ENCODE measurements at regions of chr15 and their contacts with region 1.

Region 1: DNA sequence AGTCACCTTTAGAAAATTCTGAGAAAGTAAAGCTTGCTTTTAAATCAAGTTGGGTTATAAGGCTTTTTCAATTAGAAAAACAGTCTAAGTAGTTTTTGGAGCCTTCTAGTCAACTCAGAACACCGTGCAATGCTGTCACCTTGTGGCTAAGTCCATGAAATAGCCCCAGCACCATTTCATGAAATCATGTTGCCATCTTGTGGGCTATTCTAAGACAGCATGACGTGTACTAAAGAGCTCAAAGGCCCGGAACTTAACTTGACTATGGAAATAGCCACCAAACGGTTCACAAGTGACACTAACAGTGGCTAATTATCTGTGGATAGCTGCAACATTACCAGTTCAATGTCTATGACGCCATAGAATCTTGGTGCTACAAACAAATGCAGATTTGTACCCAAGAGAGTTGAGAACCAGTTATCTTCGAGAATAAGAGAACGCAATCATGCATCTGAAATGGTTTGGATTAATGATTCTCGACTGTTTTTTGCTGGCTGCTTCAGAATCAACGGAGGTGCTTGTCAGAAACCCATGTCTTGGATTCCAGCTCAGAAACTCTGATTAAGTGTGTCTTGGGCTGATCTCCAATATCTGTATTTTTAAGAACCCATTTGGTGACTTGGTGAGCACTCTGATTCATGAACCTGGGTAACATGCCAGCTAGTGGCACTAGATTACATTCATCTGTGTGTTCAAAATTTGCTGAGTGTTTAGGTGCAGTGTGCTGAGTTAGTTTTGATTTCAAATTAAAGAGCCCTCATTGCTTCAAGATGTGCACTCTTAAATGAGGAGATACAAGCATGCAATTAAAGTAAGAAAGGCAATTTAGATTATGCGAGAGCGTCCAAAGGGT is 111.2 kb upstream of the MCTP2 start:
- DNase-seq: peak; percentile 62
- H3K4me3 ChIP-seq: peak overlapping the region in 1 of 2 experiments; percentile 18; a peak in 1 of 4 replicates
- H3K27ac ChIP-seq: peak overlapping the region in 1 of 2 experiments; percentile 17; a peak in 1 of 4 replicates
- H3K4me1 ChIP-seq: peaks cover 0 to 10% of the 10 kb centered on the region in 2 experiments; a peak in 1 of 4 replicates
- H3K27me3 ChIP-seq: no peaks in the 10 kb centered on the region
- CTCF ChIP-seq: peak; percentile 100
- EP300 ChIP-seq: no peak
- RAD21 ChIP-seq: peak; percentile 100

Region 2: DNA sequence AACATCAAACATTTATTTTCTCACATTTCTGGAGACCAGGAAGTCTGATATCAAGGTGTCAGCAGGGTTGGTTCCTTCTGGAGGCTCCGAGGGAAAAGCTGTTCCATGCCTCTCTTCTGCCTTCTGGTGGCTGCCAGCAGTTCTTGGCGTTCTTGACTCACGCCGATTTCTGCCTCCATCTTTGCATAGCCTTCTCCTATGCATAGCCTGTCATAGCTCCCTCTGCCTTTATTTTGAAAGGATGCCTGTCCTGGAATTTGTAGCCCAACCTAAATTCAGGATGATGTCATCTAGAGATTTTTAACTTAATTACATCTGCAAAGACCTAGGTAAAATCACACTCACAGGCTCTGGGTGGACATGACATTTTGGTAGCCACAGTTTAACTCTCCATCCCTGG is 1101.6 kb before region 1 on chr15:
- CTCF ChIA-PET with region 1: interaction called, 191 read pairs
- POLR2A ChIA-PET with region 1: no interaction called
- DNase-seq: no peak
- H3K4me3 ChIP-seq: no peak overlapping the region
- H3K27ac ChIP-seq: no peak overlapping the region
- H3K4me1 ChIP-seq: no peaks in the 10 kb centered on the region
- H3K27me3 ChIP-seq: no peaks in the 10 kb centered on the region
- CTCF ChIP-seq: peak; percentile 23; the same call in 1 of the 2 replicates
- EP300 ChIP-seq: no peak
- RAD21 ChIP-seq: 0 out of 2 replicates have a peak, but pooled peaks have one; percentile 20

Region 3: DNA sequence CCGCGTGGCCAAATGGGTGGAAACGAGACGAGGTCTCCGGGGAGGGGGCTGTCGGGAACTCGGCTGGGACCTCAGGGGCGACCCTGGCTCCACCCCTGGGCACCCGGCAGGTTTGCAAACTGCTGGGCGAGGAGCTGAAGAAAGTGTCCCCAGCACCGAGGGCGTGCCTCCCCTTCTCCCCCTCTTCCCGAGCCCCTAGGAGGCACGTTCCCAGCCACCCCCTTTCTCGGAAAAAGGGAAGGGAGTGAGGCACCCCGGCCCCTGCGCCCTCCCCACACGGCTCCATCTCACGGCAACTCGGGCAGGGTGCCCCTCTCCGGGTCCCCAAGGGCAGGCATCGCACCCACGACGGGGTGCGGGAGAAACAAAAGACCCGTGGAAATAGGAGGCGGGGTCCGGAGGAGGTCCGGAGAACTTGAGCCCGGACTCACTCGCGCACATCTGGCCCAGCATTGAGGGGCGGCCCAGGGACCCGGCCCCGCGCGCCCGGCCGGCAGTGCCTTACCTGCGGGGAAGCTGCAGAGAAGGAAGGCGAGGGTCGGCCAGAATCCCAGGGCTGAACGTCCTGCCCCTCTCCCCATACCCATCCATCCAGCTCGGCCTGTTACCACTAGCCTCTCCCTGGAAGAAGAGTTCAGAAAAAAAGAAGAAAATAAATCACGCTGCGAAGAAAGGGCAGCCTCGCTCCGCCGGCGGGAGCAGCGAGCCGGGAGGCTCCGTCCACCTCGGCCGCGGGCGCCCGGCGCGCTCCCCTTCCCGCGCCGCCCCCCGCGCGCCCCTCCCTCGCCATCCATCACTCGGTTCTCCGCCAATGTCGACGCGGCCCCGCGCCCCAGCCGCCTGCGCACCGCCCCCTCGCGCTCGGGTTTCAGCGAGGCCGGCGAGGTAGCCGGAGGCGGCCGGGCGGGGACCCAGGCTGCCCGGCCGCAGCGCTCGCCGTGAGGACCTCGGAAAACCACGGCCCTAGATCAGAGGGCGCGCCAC is 1047.4 kb before region 1 on chr15:
- CTCF ChIA-PET with region 1: interaction called, 23 read pairs
- POLR2A ChIA-PET with region 1: no interaction called
- DNase-seq: peak; percentile 95
- H3K4me3 ChIP-seq: peak overlapping the region; percentile 70 to 87
- H3K27ac ChIP-seq: peak overlapping the region in 1 of 2 experiments; percentile 30; a peak in 1 of 4 replicates
- H3K4me1 ChIP-seq: peaks cover 5 to 8% of the 10 kb centered on the region in 2 experiments
- H3K27me3 ChIP-seq: no peaks in the 10 kb centered on the region
- CTCF ChIP-seq: no peak
- EP300 ChIP-seq: no peak
- RAD21 ChIP-seq: no peak

Region 4: DNA sequence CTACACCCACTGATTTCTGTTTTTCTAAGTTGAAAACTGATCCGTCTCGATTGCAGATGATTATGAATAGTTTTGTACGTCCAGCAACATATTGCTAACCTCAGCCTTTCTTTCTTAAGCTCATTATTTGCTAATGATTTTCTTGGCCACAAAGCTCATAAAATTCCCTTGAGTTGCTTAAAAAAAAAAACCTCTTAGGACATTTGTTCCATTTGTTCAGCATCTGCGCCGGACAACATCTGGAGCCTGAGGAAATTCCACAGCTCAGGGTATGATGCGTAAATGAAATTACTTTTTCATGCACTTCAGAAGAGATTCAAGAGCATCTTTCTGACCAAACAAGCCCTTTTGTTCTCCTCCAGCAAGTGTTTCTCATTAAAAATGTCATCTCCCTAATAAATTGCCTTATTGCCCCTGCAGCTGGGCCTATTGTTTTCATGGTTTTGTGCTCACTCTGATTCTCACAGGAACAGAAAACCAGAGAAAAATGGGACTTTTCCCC is 137.9 kb before region 1 on chr15:
- CTCF ChIA-PET with region 1: interaction called, 39 read pairs
- POLR2A ChIA-PET with region 1: no interaction called
- DNase-seq: peak; percentile 17
- H3K4me3 ChIP-seq: no peak overlapping the region
- H3K27ac ChIP-seq: peak overlapping the region in 1 of 2 experiments; percentile 88; a peak in 2 of 4 replicates
- H3K4me1 ChIP-seq: peaks cover 0 to 20% of the 10 kb centered on the region in 2 experiments; a peak in 2 of 4 replicates
- H3K27me3 ChIP-seq: no peaks in the 10 kb centered on the region
- CTCF ChIP-seq: no peak
- EP300 ChIP-seq: peak in 1 of 2 experiments; percentile 48; a peak in 1 of 4 replicates
- RAD21 ChIP-seq: no peak; the same call in 1 of the 2 replicates

Region 5: GRCh38 chr15:94070356-94071295 is 49.5 kb before region 1 on chr15:
- CTCF ChIA-PET with region 1: interaction called, 11 read pairs
- POLR2A ChIA-PET with region 1: no interaction called
- DNase-seq: no peak
- H3K4me3 ChIP-seq: no peak overlapping the region
- H3K27ac ChIP-seq: peak overlapping the region in 1 of 2 experiments; percentile 21; a peak in 1 of 4 replicates
- H3K4me1 ChIP-seq: peaks cover 5 to 16% of the 10 kb centered on the region in 2 experiments; a peak in 2 of 4 replicates
- H3K27me3 ChIP-seq: no peaks in the 10 kb centered on the region
- CTCF ChIP-seq: no peak
- EP300 ChIP-seq: no peak
- RAD21 ChIP-seq: no peak

Region 6: GRCh38 chr15:94290730-94291129 is 170.6 kb after region 1 on chr15:
- CTCF ChIA-PET with region 1: no interaction called
- POLR2A ChIA-PET with region 1: no interaction called
- DNase-seq: no peak
- H3K4me3 ChIP-seq: no peak overlapping the region
- H3K27ac ChIP-seq: no peak overlapping the region
- H3K4me1 ChIP-seq: peaks cover 0 to 16% of the 10 kb centered on the region in 2 experiments; a peak in 2 of 4 replicates
- H3K27me3 ChIP-seq: no peaks in the 10 kb centered on the region
- CTCF ChIP-seq: no peak
- EP300 ChIP-seq: no peak
- RAD21 ChIP-seq: no peak

Region 7: DNA sequence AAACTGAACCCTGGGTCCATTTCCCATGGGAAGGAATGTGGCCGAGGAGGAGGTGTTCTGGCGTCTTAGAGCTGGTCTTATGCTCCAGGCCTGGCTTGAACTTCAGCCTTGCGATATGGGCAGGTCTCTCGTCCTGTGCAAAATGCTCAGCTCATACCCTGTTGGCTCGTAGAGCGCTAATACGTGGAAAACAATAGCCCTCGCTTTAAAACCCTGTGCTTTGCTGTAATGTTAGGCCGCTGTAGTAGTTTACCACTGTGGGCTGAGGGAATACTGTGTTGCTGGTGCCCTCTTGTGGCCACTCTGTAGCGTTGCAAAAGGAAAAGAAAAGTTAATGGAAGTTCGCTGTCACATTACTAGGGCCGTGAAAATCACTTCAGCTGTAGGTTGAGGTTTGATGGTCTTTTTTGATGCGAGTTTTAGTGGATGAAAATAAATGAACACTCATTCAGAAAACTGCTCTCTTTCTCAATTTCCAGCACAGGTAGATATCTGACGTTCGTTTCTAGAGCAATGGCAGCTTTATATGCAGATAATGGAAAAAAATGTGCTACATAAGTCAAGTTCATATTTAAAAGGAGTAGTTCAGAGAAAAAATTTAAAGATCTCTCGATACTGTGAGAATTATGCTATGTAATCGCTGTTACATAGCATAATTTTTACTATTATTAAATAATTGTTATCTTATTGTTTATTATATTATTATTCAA is 204.1 kb after region 1 on chr15:
- CTCF ChIA-PET with region 1: interaction called, 21 read pairs
- POLR2A ChIA-PET with region 1: no interaction called
- DNase-seq: peak; percentile 68
- H3K4me3 ChIP-seq: peak overlapping the region in 1 of 2 experiments; percentile 38; a peak in 1 of 4 replicates
- H3K27ac ChIP-seq: peak overlapping the region in 1 of 2 experiments; percentile 56; a peak in 1 of 4 replicates
- H3K4me1 ChIP-seq: peaks cover 0 to 3% of the 10 kb centered on the region in 2 experiments; a peak in 2 of 4 replicates
- H3K27me3 ChIP-seq: no peaks in the 10 kb centered on the region
- CTCF ChIP-seq: peak; percentile 94
- EP300 ChIP-seq: no peak
- RAD21 ChIP-seq: peak; percentile 98